ENCODE measurements at regions of chr17 and their contacts with region 1.

Region 1: GRCh38 chr17:56977673-56978395 is at the start of gene SCPEP1:
- DNase-seq: peak; percentile 68 to 90 (median 78)
- ATAC-seq: peak; percentile 93 to 95
- H3K4me3 Mint-ChIP-seq: peak within 1 kb of the TSS; percentile 89 to 96 (median 94)
- H3K27ac Mint-ChIP-seq: peak within 1 kb of the TSS; percentile 48 to 97 (median 92)
- H3K4me1 Mint-ChIP-seq: peaks cover 12 to 28% (median 25%) of the 10 kb centered on the region in 4 donors
- H3K27me3 Mint-ChIP-seq: peaks cover 0 to 3% (median 0%) of the 10 kb centered on the region in 5 donors
- polyA plus RNA-seq, gene SCPEP1: 17.6 to 28.2 (median 25.7) TPM

Region 2: DNA sequence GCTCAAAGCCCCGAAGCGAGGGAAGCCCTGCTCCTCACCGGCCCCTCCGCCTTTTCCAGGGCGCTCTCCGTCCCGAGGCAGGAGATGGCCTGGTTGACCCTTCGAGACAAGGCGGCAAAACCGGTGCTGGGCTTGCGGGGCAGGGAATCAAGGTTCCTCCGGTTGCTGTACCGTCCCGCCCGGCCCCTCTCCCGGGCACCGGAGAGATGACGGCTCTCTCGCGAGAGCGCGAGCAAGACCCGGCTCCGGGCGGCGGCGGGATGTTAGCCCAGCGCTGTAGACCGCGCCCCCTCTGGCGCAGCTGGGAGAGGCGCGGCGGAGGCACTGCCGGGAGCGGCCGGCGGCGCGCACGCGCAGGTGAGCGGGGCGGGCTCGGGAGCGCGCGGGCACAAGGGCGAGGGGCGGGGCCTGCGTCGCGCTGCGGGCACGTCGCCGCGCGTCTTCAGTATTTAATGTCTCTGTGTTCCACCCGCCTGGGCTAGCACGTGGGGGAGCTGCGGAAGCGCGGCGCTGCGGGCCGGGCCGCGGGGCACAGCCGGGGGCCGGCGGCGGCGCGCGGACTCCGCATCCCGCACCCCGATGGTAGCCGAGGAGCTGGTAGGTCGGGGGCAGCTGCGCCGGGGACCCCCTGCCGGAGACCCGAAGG is 107.1 kb after region 1 on chr17 and contains the start of gene AKAP1:
- POLR2A ChIA-PET with region 1: interaction called, 11 read pairs
- DNase-seq: peak; percentile 89 to 99 (median 96)
- ATAC-seq: peak; percentile 85 to 88
- H3K4me3 Mint-ChIP-seq: peak within 1 kb of the TSS; percentile 85 to 93 (median 91)
- H3K27ac Mint-ChIP-seq: peak within 1 kb of the TSS; percentile 87 to 97 (median 93)
- H3K4me1 Mint-ChIP-seq: peaks cover 21 to 45% (median 38%) of the 10 kb centered on the region in 4 donors
- H3K27me3 Mint-ChIP-seq: no peaks in the 10 kb centered on the region
- polyA plus RNA-seq, gene AKAP1: 14.5 to 26.9 (median 19.4) TPM

Measured in naive thymus-derived CD8-positive, alpha-beta T cell (primary cell).